Activated CD8-positive, alpha-beta T cell treated with anti-CD3 and anti-CD28 coated beads for 36 hours (primary cell): ENCODE measurements at regions of chr1 and their contacts with region 1.

Region 1: DNA sequence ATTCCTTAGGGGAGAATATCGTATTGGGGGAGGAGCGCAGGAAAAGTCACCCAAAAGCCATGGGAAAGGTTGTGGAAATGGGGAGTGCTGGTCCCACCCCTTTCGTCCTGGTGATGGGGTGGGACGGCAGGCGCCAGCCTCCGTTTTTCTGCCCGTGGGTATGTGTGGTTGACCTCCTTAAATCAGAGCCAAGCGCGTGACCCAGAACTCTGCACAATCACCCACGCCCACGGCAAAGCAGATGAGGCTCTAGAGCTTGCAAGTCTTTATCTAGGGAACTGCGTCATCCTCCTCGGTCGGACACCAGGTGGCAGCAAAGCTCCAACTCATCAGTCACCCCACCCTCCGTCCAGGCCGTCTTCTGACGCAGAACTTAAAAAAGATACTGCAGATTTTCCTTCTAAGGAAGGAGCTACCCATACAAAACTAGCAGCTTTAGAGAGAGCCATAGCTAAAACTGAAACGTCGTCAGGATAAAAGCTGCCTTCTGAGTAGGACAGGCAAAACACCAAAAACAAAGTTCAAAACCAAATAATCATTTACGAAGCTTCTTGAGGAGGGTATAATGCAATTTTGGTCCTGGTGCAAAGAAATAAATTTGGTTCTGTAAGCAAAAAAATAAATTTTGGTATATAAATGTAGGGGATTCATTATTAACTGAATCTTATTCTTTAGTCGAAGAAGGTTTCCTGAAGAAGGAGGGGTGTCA is 62.0 kb downstream of the TBX19 start:
- DNase-seq: peak; percentile 94
- ATAC-seq: peak; percentile 98
- H3K4me3 Mint-ChIP-seq: no peak overlapping the region
- H3K27ac Mint-ChIP-seq: peak overlapping the region; percentile 64
- H3K4me1 Mint-ChIP-seq: peaks cover 35% of the 10 kb centered on the region
- H3K27me3 Mint-ChIP-seq: peaks cover 4% of the 10 kb centered on the region
- CTCF ChIP-seq: peak; percentile 77

Region 2: GRCh38 chr1:168195199-168196135 is 147.3 kb before region 1 on chr1:
- CTCF ChIA-PET with region 1: no interaction called
- POLR2A ChIA-PET with region 1: no interaction called
- intact Hi-C with region 1: no loop called
- DNase-seq: no peak
- ATAC-seq: no peak
- H3K4me3 Mint-ChIP-seq: no peak overlapping the region
- H3K27ac Mint-ChIP-seq: no peak overlapping the region
- H3K4me1 Mint-ChIP-seq: peaks cover 9% of the 10 kb centered on the region
- H3K27me3 Mint-ChIP-seq: no peaks in the 10 kb centered on the region
- CTCF ChIP-seq: no peak

Region 3: DNA sequence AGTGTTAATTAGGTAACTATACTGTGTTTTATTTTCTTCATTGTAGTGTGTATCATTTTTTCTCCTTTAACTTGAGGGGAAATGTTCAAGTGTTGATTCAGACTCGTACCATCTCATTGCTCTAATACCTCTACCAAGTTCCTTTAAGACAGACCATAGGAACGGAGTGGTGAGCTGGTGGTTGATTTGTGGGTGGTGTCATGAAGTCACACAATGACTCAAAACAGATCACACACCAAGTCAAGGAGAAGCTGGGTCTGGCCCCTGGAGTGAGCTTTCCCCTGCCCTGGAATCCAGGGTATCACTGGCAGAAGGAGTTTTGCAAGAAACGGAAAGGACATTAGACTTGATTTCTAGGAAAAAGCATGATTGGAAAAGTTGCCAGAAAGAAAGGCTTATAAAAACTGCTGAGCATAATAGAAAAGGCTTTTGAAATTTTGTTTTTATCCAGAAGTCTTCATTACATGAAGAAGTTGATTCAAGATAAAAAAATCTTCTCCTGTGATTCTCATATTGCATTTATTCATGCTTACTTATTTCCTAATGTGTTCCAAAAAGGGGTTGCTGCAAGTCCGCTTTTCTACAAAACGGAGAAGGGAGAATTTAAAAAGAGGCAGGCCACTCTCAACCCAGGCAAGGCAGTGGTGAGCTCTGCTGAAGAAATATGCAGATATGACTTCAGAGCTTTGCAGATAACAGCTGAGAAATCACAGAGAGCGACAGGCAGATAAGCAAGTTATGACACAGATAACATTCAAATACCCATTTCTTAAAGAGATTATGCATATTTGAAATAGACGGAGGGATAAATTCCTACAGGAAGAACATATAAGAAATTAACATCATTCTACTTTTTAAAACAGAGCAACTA is 17.7 kb after region 1 on chr1:
- CTCF ChIA-PET with region 1: interaction called, 61 read pairs
- POLR2A ChIA-PET with region 1: interaction called, 3 read pairs
- intact Hi-C with region 1: no loop called
- DNase-seq: peak; percentile 69
- ATAC-seq: peak; percentile 50
- H3K4me3 Mint-ChIP-seq: no peak overlapping the region
- H3K27ac Mint-ChIP-seq: no peak overlapping the region
- H3K4me1 Mint-ChIP-seq: peaks cover 16% of the 10 kb centered on the region
- H3K27me3 Mint-ChIP-seq: no peaks in the 10 kb centered on the region
- CTCF ChIP-seq: no peak

Region 4: GRCh38 chr1:168386949-168387586 is 44.3 kb after region 1 on chr1:
- CTCF ChIA-PET with region 1: interaction called, 18 read pairs
- POLR2A ChIA-PET with region 1: no interaction called
- intact Hi-C with region 1: no loop called
- DNase-seq: peak; percentile 83
- ATAC-seq: peak; percentile 92
- H3K4me3 Mint-ChIP-seq: peak overlapping the region; percentile 40
- H3K27ac Mint-ChIP-seq: peak overlapping the region; percentile 58
- H3K4me1 Mint-ChIP-seq: peaks cover 16% of the 10 kb centered on the region
- H3K27me3 Mint-ChIP-seq: peaks cover 4% of the 10 kb centered on the region
- CTCF ChIP-seq: no peak

Region 5: GRCh38 chr1:168421399-168422004 is 78.8 kb after region 1 on chr1:
- CTCF ChIA-PET with region 1: interaction called, 31 read pairs
- POLR2A ChIA-PET with region 1: interaction called, 3 read pairs
- intact Hi-C with region 1: no loop called
- DNase-seq: no peak
- ATAC-seq: peak; percentile 90
- H3K4me3 Mint-ChIP-seq: peak overlapping the region; percentile 22
- H3K27ac Mint-ChIP-seq: peak overlapping the region; percentile 89
- H3K4me1 Mint-ChIP-seq: peaks cover 29% of the 10 kb centered on the region
- H3K27me3 Mint-ChIP-seq: no peaks in the 10 kb centered on the region
- CTCF ChIP-seq: no peak

Region 6: GRCh38 chr1:168439456-168440375 is 97.0 kb after region 1 on chr1:
- CTCF ChIA-PET with region 1: interaction called, 75 read pairs
- POLR2A ChIA-PET with region 1: interaction called, 5 read pairs
- intact Hi-C with region 1: loop called (anchors 5 kb)
- DNase-seq: peak; percentile 94
- ATAC-seq: peak; percentile 92
- H3K4me3 Mint-ChIP-seq: peak overlapping the region; percentile 68
- H3K27ac Mint-ChIP-seq: peak overlapping the region; percentile 85
- H3K4me1 Mint-ChIP-seq: peaks cover 58% of the 10 kb centered on the region
- H3K27me3 Mint-ChIP-seq: no peaks in the 10 kb centered on the region
- CTCF ChIP-seq: peak; percentile 75

Region 7: GRCh38 chr1:168603501-168604110 is 260.9 kb after region 1 on chr1:
- CTCF ChIA-PET with region 1: interaction called, 18 read pairs
- POLR2A ChIA-PET with region 1: no interaction called
- intact Hi-C with region 1: no loop called
- DNase-seq: peak; percentile 84
- ATAC-seq: peak; percentile 91
- H3K4me3 Mint-ChIP-seq: no peak overlapping the region
- H3K27ac Mint-ChIP-seq: no peak overlapping the region
- H3K4me1 Mint-ChIP-seq: no peaks in the 10 kb centered on the region
- H3K27me3 Mint-ChIP-seq: no peaks in the 10 kb centered on the region
- CTCF ChIP-seq: peak; percentile 55